HEK293 (cell line): ENCODE measurements at regions of chr17 and their contacts with region 1.

Region 1: DNA sequence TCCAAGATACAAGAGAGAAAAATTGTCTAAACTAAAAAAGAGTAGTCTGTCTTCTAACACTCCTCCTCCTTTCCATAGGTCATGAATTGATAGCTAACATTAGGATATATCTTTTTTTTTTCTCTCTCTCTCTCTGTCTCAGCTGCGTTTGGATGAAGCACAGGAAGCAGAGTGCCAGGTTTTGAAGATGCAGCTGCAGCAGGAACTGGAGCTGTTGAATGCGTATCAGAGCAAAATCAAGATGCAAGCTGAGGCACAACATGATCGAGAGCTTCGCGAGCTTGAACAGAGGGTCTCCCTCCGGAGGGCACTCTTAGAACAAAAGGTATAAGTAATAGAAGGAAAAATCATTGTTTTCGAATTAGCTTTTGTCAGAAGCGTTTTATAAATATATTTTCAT is 32.9 kb downstream of the ABHD15 start:
- H3K4me3 ChIP-seq: no peak overlapping the region
- H3K27ac ChIP-seq: no peak overlapping the region
- H3K4me1 ChIP-seq: no peaks in the 10 kb centered on the region
- CTCF ChIP-seq: no peak

Region 2: DNA sequence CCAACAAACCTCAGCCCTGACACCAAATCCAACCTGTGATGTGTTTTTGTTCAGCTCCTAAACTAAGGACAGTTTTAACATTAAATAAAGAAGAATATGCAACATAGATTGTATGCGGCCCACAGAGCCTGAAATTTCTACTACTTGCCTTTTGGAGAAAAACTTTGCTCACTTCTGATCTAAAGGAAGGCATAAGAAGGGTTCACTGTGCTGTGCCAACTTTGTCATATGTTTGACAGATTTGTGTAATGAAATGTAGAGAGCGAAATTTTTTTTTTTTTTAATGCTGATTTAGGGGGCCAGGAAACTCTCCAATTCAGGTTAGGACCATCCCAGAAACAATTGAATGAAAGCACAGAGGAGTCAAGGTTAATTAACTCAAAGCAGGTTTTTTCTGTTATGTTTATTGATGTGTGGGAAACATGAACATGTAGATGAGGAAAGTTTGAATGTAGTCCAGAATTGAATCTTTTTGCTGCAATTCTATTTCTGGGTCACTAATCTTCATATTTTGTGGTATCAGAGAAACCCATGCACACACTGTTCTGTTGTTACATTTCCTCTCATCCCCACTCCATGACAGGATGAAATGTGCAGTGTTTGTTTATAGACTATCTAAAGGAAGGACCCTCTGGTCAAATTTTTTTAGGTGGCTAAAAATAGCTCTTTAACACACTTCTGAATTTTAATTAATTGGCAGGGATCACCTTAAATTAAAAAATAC is 72.3 kb before region 1 on chr17:
- CTCF ChIA-PET with region 1: interaction called, 10 read pairs
- POLR2A ChIA-PET with region 1: no interaction called
- H3K4me3 ChIP-seq: no peak overlapping the region
- H3K27ac ChIP-seq: no peak overlapping the region
- H3K4me1 ChIP-seq: peaks cover 22% of the 10 kb centered on the region
- CTCF ChIP-seq: no peak

Region 3: GRCh38 chr17:29549177-29549923 is 15.4 kb after region 1 on chr17:
- CTCF ChIA-PET with region 1: interaction called, 17 read pairs
- POLR2A ChIA-PET with region 1: interaction called, 4 read pairs
- H3K4me3 ChIP-seq: no peak overlapping the region
- H3K27ac ChIP-seq: no peak overlapping the region
- H3K4me1 ChIP-seq: peaks cover 13% of the 10 kb centered on the region
- CTCF ChIP-seq: no peak